Heart left ventricle (tissue), 16 donors: ENCODE measurements at regions of chr10 and their contacts with region 1.

Region 1: GRCh38 chr10:130885021-130885655 is 426.4 kb downstream of the TCERG1L start:
- DNase-seq: no peak
- ATAC-seq: no peak
- H3K4me3 ChIP-seq: no peak overlapping the region
- H3K27ac ChIP-seq: no peak overlapping the region
- H3K4me1 ChIP-seq: no peaks in the 10 kb centered on the region
- H3K27me3 ChIP-seq: peaks cover 0 to 41% (median 0%) of the 10 kb centered on the region in 9 donors
- CTCF ChIP-seq: no peak
- POLR2A ChIP-seq: no peak

Region 2: DNA sequence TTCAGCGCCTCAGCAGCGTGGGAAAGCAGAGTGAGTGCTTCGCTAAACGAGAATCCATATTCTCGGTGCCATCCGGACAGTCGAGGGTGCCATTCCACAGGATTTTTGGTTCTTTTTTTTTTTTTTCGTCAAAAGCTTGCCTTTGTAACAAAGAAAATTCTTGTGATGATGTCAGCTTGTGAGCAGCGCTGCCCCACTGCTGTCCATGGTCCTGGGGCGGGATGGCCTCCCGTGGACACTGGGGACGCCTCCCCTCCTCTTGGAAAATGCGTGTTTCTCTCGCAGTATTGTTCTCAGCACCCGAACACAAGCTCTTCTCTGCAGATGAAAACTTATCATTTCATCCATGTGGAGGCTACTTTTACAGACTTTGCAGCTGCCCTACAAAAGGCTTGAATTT is 51.0 kb before region 1 on chr10:
- intact Hi-C with region 1: no loop called
- DNase-seq: no peak
- ATAC-seq: no peak
- H3K4me3 ChIP-seq: no peak overlapping the region
- H3K27ac ChIP-seq: no peak overlapping the region
- H3K4me1 ChIP-seq: no peaks in the 10 kb centered on the region
- H3K27me3 ChIP-seq: peaks cover 0 to 11% (median 0%) of the 10 kb centered on the region in 9 donors
- CTCF ChIP-seq: no peak
- POLR2A ChIP-seq: no peak

Region 3: GRCh38 chr10:131569851-131570715 is 684.9 kb after region 1 on chr10:
- intact Hi-C with region 1: loop called in 1 of 10 experiments (anchors 10 kb)
- DNase-seq: no peak
- ATAC-seq: no peak
- H3K4me3 ChIP-seq: no peak overlapping the region
- H3K27ac ChIP-seq: no peak overlapping the region
- H3K4me1 ChIP-seq: no peaks in the 10 kb centered on the region
- H3K27me3 ChIP-seq: peaks cover 0 to 6% (median 0%) of the 10 kb centered on the region in 9 donors
- CTCF ChIP-seq: no peak
- POLR2A ChIP-seq: no peak